ENCODE measurements at regions of chr10 and their contacts with region 1.

Region 1: GRCh38 chr10:4131407-4132228 is 346.6 kb upstream of the KLF6 start:
- DNase-seq: peak; percentile 43
- H3K4me3 Mint-ChIP-seq: no peak overlapping the region
- H3K27ac Mint-ChIP-seq: no peak overlapping the region
- H3K4me1 Mint-ChIP-seq: peaks cover 24% of the 10 kb centered on the region
- H3K27me3 Mint-ChIP-seq: no peaks in the 10 kb centered on the region

Region 2: GRCh38 chr10:2949948-2950354 is 1181.7 kb before region 1 on chr10:
- CTCF ChIA-PET with region 1: no interaction called
- intact Hi-C with region 1: loop called (anchors 5 kb)
- DNase-seq: peak; percentile 69
- H3K4me3 Mint-ChIP-seq: no peak overlapping the region
- H3K27ac Mint-ChIP-seq: peak overlapping the region; percentile 50
- H3K4me1 Mint-ChIP-seq: peaks cover 31% of the 10 kb centered on the region
- H3K27me3 Mint-ChIP-seq: peaks cover 35% of the 10 kb centered on the region

Region 3: DNA sequence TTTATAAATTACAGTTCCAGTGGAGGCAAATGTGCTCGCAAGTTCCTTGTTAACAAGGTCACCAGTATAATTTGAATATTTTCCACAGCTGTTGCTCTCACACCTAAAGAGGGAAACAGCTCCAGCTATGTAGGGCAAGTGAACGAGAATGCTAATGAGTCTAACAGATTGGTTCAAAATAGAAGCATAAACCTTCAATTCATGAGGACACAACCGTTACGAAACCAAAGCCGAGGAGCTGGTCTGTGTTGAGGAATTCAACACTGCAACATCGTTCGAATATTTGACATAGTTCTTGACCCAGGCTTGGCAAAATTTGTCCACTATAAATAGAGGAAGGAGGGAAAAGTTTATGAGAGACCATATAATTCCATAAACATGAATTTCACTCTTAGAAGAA is 507.9 kb before region 1 on chr10:
- CTCF ChIA-PET with region 1: no interaction called
- intact Hi-C with region 1: loop called (anchors 1 kb)
- DNase-seq: no peak
- H3K4me3 Mint-ChIP-seq: no peak overlapping the region
- H3K27ac Mint-ChIP-seq: no peak overlapping the region
- H3K4me1 Mint-ChIP-seq: peaks cover 21% of the 10 kb centered on the region
- H3K27me3 Mint-ChIP-seq: peaks cover 2% of the 10 kb centered on the region

Region 4: GRCh38 chr10:3852147-3852904 is 279.3 kb before region 1 on chr10:
- CTCF ChIA-PET with region 1: no interaction called
- intact Hi-C with region 1: loop called (anchors 5 kb)
- DNase-seq: peak; percentile 85
- H3K4me3 Mint-ChIP-seq: no peak overlapping the region
- H3K27ac Mint-ChIP-seq: peak overlapping the region; percentile 88
- H3K4me1 Mint-ChIP-seq: peaks cover 49% of the 10 kb centered on the region
- H3K27me3 Mint-ChIP-seq: no peaks in the 10 kb centered on the region

Region 5: DNA sequence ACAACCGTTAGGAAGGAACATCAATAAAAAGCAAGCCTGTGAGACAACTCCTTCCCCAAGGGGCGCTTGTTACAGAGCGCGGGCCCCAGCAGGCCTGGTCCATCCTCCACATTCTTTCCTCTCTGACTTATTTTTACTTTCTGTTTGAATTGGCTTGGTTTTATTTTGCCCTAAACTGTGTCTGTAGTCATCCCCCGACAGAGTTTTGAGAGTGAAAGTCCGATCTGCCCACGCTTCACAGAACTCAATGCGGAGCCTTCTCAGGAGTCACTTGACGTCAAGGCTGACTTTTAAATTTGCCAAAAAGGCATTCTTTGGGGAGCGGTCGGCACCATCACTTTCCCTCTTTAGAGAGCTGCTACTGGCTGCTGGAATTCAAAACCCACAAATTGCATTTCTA is 196.5 kb before region 1 on chr10:
- CTCF ChIA-PET with region 1: no interaction called
- intact Hi-C with region 1: loop called (anchors 2 kb)
- DNase-seq: peak; percentile 92
- H3K4me3 Mint-ChIP-seq: peak overlapping the region; percentile 10
- H3K27ac Mint-ChIP-seq: peak overlapping the region; percentile 88
- H3K4me1 Mint-ChIP-seq: peaks cover 40% of the 10 kb centered on the region
- H3K27me3 Mint-ChIP-seq: no peaks in the 10 kb centered on the region

Region 6: GRCh38 chr10:4195213-4195612 is 63.6 kb after region 1 on chr10:
- CTCF ChIA-PET with region 1: no interaction called
- intact Hi-C with region 1: no loop called
- DNase-seq: no peak
- H3K4me3 Mint-ChIP-seq: no peak overlapping the region
- H3K27ac Mint-ChIP-seq: no peak overlapping the region
- H3K4me1 Mint-ChIP-seq: peaks cover 13% of the 10 kb centered on the region
- H3K27me3 Mint-ChIP-seq: no peaks in the 10 kb centered on the region

Region 7: DNA sequence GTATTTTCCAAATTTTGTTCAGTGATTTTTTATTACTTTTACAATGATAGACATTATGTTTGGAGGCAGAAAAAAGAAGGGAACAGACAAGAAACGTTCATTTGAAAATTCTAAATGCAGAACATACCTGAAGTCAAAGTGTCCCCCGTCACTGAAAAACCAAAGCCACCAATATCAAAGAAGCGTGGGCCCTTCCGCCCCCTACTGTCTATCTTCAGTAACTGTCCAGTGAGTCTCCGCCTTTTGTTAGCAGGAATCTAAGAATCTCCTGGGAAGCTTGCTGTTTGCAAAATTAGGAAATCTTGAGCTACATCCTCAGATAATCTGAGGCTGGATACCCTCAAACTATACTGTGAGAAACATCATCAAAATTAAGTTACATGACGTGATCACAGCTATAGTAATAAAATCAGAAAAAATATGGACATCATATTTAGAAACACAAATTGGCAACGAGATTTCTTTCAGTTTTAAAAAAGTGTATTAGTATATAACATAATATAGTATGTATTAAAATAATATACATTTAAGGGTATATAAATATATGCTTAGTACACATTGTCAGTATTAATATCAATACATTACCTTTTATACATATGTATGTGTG is 525.1 kb after region 1 on chr10:
- CTCF ChIA-PET with region 1: no interaction called
- intact Hi-C with region 1: loop called (anchors 1 kb)
- DNase-seq: peak; percentile 58
- H3K4me3 Mint-ChIP-seq: no peak overlapping the region
- H3K27ac Mint-ChIP-seq: no peak overlapping the region
- H3K4me1 Mint-ChIP-seq: peaks cover 18% of the 10 kb centered on the region
- H3K27me3 Mint-ChIP-seq: peaks cover 9% of the 10 kb centered on the region

Measured in activated naive CD4-positive, alpha-beta T cell treated with anti-CD3 and anti-CD28 coated beads for 36 hours (primary cell).